A549 (cell line): ENCODE measurements at regions of chr2 and their contacts with region 1.

Region 1: DNA sequence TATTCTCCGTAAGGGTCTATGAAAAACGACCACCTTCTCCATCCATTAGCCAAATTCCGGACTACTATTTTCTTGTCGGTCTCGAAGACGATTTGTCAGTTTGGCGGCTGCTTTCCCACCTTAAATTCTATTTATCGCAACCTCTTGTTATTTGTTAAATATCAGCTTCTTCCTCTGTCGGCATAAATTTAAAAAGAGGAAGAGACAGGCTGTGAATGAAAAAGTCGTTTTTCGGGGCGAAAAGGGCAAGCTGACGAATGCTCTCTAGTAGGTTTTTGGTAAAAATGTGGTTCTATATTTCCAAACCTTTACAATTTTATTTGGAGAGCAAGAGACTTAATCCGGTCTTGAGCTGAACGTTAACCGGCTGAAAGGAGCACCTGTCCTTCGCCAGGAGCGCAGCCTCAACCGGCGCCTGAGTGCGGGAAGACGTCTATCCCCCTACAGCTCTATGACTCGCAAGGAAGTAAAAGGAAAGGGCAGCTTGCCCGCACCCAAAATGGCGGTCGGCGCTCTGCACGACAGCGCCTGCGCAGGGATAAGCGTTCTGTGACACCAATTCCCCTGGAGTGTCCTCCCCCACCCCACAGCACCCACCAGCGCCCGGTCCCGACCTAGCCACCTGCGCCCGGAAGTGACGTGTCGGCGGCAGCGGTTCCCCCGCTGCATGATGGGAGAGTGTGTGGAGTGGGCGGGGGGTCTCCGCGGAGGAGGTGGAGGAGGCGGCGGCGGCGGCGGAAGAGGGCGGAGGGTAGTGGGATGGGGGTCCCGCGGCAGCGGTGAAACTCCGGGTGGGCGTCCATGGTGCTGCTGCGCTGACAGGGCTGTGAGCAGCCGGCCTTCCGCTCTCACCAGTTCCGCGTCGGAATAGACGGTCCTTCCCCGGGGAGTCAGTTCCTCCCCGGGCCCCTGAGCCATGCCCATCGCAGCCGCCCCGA is at the start of gene AFTPH:
- DNase-seq: peak; percentile 98 to 99
- ATAC-seq: peak; percentile 95 to 98
- H3K4me3 ChIP-seq: peak within 1 kb of the TSS; percentile 89
- H3K27ac ChIP-seq: peak within 1 kb of the TSS; percentile 86 to 96
- H3K4me1 ChIP-seq: peaks cover 15% of the 10 kb centered on the region; the same call in 2 of the 3 replicates
- CTCF ChIP-seq: no peak; the same call in 2 of the 3 replicates
- EP300 ChIP-seq: no peak
- POLR2A ChIP-seq: peak; percentile 61
- RAD21 ChIP-seq: no peak
- polyA plus RNA-seq, gene AFTPH: 51.4 and 56.6 TPM in 2 replicates

Region 2: GRCh38 chr2:63977904-63978303 is 546.0 kb before region 1 on chr2:
- CTCF ChIA-PET with region 1: no interaction called
- POLR2A ChIA-PET with region 1: no interaction called
- DNase-seq: no peak
- ATAC-seq: no peak
- H3K4me3 ChIP-seq: no peak overlapping the region
- H3K27ac ChIP-seq: no peak overlapping the region
- H3K4me1 ChIP-seq: peaks cover 17% of the 10 kb centered on the region; the same call in 2 of the 3 replicates
- CTCF ChIP-seq: no peak
- EP300 ChIP-seq: no peak
- POLR2A ChIP-seq: no peak
- RAD21 ChIP-seq: no peak

Region 3: DNA sequence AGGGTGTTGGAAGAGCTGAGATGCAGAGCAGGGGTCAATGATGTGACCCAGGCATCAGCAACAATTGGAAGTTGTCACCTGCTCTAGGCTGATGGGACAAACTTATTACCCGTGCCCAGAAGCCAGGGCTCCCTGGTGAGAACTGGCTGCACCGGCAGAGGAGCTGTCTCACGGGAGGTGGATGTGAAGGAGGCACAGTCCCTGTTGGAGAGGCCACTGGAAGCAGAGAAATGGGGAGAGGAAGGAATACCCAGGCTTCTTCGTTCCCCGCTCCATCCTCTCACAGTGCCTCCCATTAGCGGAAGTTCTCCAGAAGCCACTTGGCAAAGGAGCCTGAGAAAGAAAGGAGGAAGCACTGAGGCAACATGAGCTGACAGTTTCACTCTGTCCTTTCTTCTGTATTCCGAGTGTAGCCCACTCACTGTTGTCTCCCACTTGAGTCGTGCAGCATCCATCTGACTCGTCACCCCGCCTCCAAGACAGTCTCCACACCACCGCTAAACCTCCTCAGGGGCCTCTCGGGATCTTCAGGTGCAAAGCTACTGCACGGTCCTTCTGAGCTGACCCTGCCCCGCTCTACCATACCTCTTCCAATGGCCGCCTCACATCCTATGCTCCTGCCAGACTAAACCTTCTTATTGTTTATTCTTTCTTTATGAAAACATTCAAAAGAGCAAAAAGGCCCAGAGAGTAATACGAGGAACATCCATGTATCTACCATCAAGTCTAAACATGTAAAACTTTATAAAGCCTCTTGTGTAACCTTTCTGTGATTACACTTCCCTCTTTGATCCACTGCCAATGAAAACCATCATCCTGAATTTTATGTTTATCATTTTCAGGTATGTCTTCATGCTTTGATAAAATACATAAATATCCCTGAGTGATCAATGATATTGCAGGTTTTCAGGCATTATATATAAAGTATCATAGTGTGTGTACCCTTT is 18.9 kb before region 1 on chr2:
- CTCF ChIA-PET with region 1: interaction called, 22 read pairs
- POLR2A ChIA-PET with region 1: no interaction called
- DNase-seq: no peak
- ATAC-seq: no peak
- H3K4me3 ChIP-seq: no peak overlapping the region
- H3K27ac ChIP-seq: no peak overlapping the region
- H3K4me1 ChIP-seq: no peaks in the 10 kb centered on the region
- CTCF ChIP-seq: no peak
- EP300 ChIP-seq: no peak
- POLR2A ChIP-seq: no peak
- RAD21 ChIP-seq: no peak

Region 4: GRCh38 chr2:64562148-64562784 is 38.3 kb after region 1 on chr2:
- CTCF ChIA-PET with region 1: interaction called, 63 read pairs
- POLR2A ChIA-PET with region 1: interaction called, 3 read pairs
- DNase-seq: peak; percentile 6 to 41
- ATAC-seq: peak; percentile 73 to 85; a peak in 5 of 6 replicates
- H3K4me3 ChIP-seq: no peak overlapping the region
- H3K27ac ChIP-seq: no peak overlapping the region
- H3K4me1 ChIP-seq: 0 out of 3 replicates have a peak, but pooled peaks cover 3% of the 10 kb centered on the region
- CTCF ChIP-seq: peak; percentile 72
- EP300 ChIP-seq: no peak
- POLR2A ChIP-seq: no peak
- RAD21 ChIP-seq: peak; percentile 77 to 80

Region 5: GRCh38 chr2:64820901-64821300 is 297.0 kb after region 1 on chr2:
- CTCF ChIA-PET with region 1: no interaction called
- POLR2A ChIA-PET with region 1: no interaction called
- DNase-seq: no peak
- ATAC-seq: no peak
- H3K4me3 ChIP-seq: no peak overlapping the region
- H3K27ac ChIP-seq: no peak overlapping the region
- H3K4me1 ChIP-seq: no peaks in the 10 kb centered on the region
- CTCF ChIP-seq: no peak
- EP300 ChIP-seq: no peak
- POLR2A ChIP-seq: no peak
- RAD21 ChIP-seq: no peak

Region 6: GRCh38 chr2:64932371-64933216 is 408.7 kb after region 1 on chr2:
- CTCF ChIA-PET with region 1: no interaction called
- POLR2A ChIA-PET with region 1: no interaction called
- DNase-seq: no peak
- ATAC-seq: no peak
- H3K4me3 ChIP-seq: no peak overlapping the region
- H3K27ac ChIP-seq: no peak overlapping the region
- H3K4me1 ChIP-seq: no peaks in the 10 kb centered on the region
- CTCF ChIP-seq: no peak
- EP300 ChIP-seq: no peak
- POLR2A ChIP-seq: no peak
- RAD21 ChIP-seq: no peak